Right ventricle myocardium inferior (tissue), 1 donor: ENCODE measurements at regions of chr6 and their contacts with region 1.

Region 1: GRCh38 chr6:113909234-113909856 is 52.2 kb downstream of the MARCKS start:
- DNase-seq: no peak
- ATAC-seq: no peak

Region 2: GRCh38 chr6:112337209-112337638 is 1572.1 kb before region 1 on chr6:
- intact Hi-C with region 1: loop called (anchors 10 kb)
- DNase-seq: no peak
- ATAC-seq: peak; percentile 90

Region 3: GRCh38 chr6:112780498-112781096 is 1128.7 kb before region 1 on chr6:
- intact Hi-C with region 1: loop called (anchors 1 kb)
- DNase-seq: no peak
- ATAC-seq: peak; percentile 91